ENCODE measurements at regions of chr19 and their contacts with region 1.

Region 1: GRCh38 chr19:51660975-51661600 is 14.5 kb upstream of the SIGLEC14 start:
- DNase-seq: peak; percentile 77 to 91 (median 80)
- ATAC-seq: peak; percentile 94
- H3K4me3 ChIP-seq: no peak overlapping the region
- H3K27ac ChIP-seq: no peak overlapping the region
- H3K4me1 ChIP-seq: peaks cover 0 to 2% of the 10 kb centered on the region in 2 experiments; a peak in 2 of 5 replicates
- H3K27me3 ChIP-seq: no peaks in the 10 kb centered on the region
- CTCF ChIP-seq: peak; percentile 74 to 89 (median 88)
- EP300 ChIP-seq: no peak
- POLR2A ChIP-seq: no peak
- RAD21 ChIP-seq: peak; percentile 75 to 89

Region 2: GRCh38 chr19:51158474-51159129 is 502.5 kb before region 1 on chr19:
- CTCF ChIA-PET with region 1: interaction called, 3 read pairs
- POLR2A ChIA-PET with region 1: no interaction called
- in situ Hi-C with region 1: loop called (anchors 25 kb)
- intact Hi-C with region 1: loop called (anchors 10 kb)
- DNase-seq: peak; percentile 73 to 85 (median 78)
- ATAC-seq: peak; percentile 96
- H3K4me3 ChIP-seq: no peak overlapping the region
- H3K27ac ChIP-seq: peak overlapping the region; percentile 34; the same call in 1 of the 3 replicates
- H3K4me1 ChIP-seq: peaks cover 0 to 9% of the 10 kb centered on the region in 2 experiments; a peak in 2 of 5 replicates
- H3K27me3 ChIP-seq: peaks cover 3 to 18% of the 10 kb centered on the region in 2 experiments; a peak in 3 of 5 replicates
- CTCF ChIP-seq: peak; percentile 84 to 91 (median 89)
- EP300 ChIP-seq: no peak
- POLR2A ChIP-seq: no peak
- RAD21 ChIP-seq: peak; percentile 82 to 86

Region 3: DNA sequence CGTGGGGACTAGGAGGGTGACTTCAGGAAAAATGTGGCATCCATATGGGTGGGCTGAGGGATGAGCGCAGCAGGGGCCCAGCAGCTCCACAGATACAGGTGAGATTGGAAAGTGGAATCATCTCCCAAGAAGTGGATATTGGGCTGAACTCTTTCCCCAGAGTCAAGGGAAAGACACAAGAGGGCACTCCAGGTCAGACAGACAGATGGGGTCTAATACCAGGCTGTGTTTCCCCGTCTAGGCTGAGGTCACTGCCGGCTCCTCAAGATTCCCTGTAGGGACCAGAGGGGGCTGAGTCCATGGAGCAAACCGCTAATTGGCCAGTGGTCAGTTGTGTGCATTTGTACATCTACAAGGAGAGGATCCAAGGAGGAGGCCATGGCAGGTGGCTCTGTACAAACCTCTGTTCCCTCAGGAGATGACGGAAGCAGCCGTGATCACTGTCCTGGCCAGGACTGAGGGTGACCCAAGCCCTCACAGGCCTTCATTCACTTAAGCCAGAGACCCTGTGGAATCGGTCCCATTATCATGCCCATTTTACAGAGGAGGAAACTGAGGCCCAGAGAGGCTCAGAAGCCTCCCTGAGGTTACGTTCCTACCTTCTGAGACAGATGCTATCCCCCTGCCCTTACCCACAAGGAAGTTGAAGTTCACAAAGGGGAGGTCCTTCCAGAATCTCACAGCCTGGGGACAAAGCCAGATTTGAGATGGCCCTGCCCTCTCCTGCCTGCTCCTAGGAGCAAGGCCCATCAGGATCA is 364.6 kb before region 1 on chr19:
- CTCF ChIA-PET with region 1: interaction called, 3 read pairs
- POLR2A ChIA-PET with region 1: no interaction called
- in situ Hi-C with region 1: no loop called
- intact Hi-C with region 1: loop called (anchors 2 kb)
- DNase-seq: peak; percentile 25 to 51 (median 34)
- ATAC-seq: peak; percentile 79
- H3K4me3 ChIP-seq: no peak overlapping the region
- H3K27ac ChIP-seq: no peak overlapping the region
- H3K4me1 ChIP-seq: peaks cover 0 to 7% of the 10 kb centered on the region in 2 experiments; a peak in 2 of 5 replicates
- H3K27me3 ChIP-seq: peaks cover 27 to 80% of the 10 kb centered on the region in 2 experiments; a peak in 4 of 5 replicates
- CTCF ChIP-seq: peak; percentile 44 to 69 (median 50); a peak in 5 of 6 replicates
- EP300 ChIP-seq: no peak
- POLR2A ChIP-seq: no peak
- RAD21 ChIP-seq: peak; percentile 47 to 79

Region 4: GRCh38 chr19:51422053-51422448 is 239.0 kb before region 1 on chr19:
- CTCF ChIA-PET with region 1: interaction called, 30 read pairs
- POLR2A ChIA-PET with region 1: interaction called, 5 read pairs
- in situ Hi-C with region 1: loop called (anchors 5 kb)
- intact Hi-C with region 1: loop called (anchors 1 kb)
- DNase-seq: peak; percentile 90 to 95 (median 94)
- ATAC-seq: peak; percentile 95
- H3K4me3 ChIP-seq: no peak overlapping the region
- H3K27ac ChIP-seq: no peak overlapping the region
- H3K4me1 ChIP-seq: peaks cover 3 to 23% of the 10 kb centered on the region in 2 experiments
- H3K27me3 ChIP-seq: no peaks in the 10 kb centered on the region
- CTCF ChIP-seq: peak; percentile 96
- EP300 ChIP-seq: peak; percentile 18; the same call in 1 of the 2 replicates
- POLR2A ChIP-seq: no peak
- RAD21 ChIP-seq: peak; percentile 98 to 100

Region 5: GRCh38 chr19:51473009-51473707 is 187.9 kb before region 1 on chr19:
- CTCF ChIA-PET with region 1: interaction called, 12 read pairs
- POLR2A ChIA-PET with region 1: interaction called, 3 read pairs
- in situ Hi-C with region 1: loop called (anchors 10 kb)
- intact Hi-C with region 1: loop called (anchors 2 kb)
- DNase-seq: peak; percentile 74 to 94 (median 80)
- ATAC-seq: peak; percentile 66
- H3K4me3 ChIP-seq: no peak overlapping the region
- H3K27ac ChIP-seq: no peak overlapping the region
- H3K4me1 ChIP-seq: peaks cover 19 to 33% of the 10 kb centered on the region in 2 experiments
- H3K27me3 ChIP-seq: no peaks in the 10 kb centered on the region
- CTCF ChIP-seq: peak; percentile 93 to 98 (median 93)
- EP300 ChIP-seq: 0 out of 2 replicates have a peak, but pooled peaks have one; percentile 34
- POLR2A ChIP-seq: no peak
- RAD21 ChIP-seq: peak; percentile 91 to 98

Region 6: DNA sequence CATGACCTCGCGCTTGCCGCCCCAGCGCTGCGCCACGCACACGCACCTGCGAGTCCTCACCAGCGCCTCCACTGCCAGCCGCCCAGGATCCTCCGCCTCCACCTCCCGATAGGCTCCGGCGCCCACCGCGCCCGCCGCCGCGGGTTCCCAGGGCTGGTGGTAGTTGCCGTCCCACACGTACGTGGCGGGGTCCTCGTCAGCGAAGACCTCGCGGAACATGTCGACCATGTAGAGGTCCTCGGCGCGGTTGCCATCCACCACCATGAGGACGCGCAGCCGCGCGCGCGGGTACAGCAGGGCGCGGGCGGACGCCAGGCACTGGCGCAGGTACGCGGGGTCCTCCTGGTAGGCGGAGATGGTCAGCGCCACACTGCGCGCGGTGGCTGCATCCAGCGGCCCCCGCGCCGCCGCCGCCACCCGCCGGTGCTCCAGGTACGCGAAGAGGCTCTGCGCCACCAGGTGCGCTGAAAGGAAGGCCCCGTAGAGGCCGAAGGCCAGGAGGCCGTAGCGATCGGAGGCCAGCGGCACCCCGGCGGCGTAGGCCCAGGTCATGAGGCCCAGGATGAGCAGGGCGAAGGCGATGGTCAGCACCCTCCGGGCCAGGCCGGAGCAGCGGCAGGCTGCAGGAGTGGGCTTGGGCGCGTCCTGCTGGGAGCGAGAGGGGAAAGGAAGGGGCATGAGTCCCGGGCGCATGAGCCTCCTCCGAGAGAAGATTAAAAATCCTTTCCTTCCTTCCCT is 58.3 kb after region 1 on chr19:
- CTCF ChIA-PET with region 1: no interaction called
- POLR2A ChIA-PET with region 1: no interaction called
- in situ Hi-C with region 1: no loop called
- intact Hi-C with region 1: no loop called
- DNase-seq: no peak
- ATAC-seq: no peak
- H3K4me3 ChIP-seq: no peak overlapping the region
- H3K27ac ChIP-seq: no peak overlapping the region
- H3K4me1 ChIP-seq: peaks cover 0 to 15% of the 10 kb centered on the region in 2 experiments; a peak in 2 of 5 replicates
- H3K27me3 ChIP-seq: peaks cover 0 to 7% of the 10 kb centered on the region in 2 experiments; a peak in 1 of 5 replicates
- CTCF ChIP-seq: no peak
- EP300 ChIP-seq: no peak
- POLR2A ChIP-seq: no peak
- RAD21 ChIP-seq: no peak

Region 7: DNA sequence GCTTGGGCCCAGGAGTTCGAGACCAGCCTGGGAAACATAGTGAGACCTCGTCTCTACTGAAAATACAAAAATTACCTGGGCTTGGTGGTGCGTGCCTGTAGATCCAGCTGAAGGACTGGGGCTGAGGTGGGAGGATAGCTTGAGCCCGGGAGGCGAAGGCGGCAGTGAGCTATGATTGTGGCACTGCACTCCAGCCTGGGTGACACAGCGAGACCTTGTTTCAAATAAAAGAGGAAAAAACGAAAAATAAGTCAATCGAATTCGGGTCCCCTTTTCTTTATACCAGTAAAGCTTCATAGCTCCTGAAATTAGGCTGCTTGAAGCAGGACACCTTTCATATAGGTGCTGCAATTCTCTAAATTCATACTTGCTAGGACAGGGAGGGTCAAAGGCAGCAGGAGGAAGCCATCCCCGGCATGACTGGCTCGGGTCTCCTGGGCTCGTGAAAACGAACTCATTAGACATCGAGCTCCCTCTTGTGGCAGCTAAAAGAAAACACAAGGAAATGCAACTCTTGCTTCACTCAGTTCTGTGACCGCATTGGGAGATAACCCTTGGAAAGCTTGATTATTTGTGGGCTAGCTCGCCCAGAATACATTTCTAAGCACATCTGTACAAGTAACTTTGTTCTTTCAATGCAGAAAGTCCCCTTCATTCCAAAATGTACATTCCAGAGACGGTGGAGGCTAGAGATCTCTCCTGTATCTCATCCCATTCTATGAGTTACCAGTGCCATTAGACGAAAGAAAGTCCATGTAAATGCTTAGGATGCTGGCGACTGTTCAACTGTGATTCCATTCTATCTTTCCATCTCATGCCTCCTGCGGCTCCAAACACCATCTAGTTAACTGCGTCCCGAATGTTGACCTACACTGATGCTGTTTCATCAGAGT is 116.7 kb after region 1 on chr19:
- CTCF ChIA-PET with region 1: no interaction called
- POLR2A ChIA-PET with region 1: no interaction called
- in situ Hi-C with region 1: no loop called
- intact Hi-C with region 1: loop called (anchors 2 kb)
- DNase-seq: peak; percentile 68 to 96 (median 71)
- ATAC-seq: peak; percentile 99
- H3K4me3 ChIP-seq: no peak overlapping the region
- H3K27ac ChIP-seq: peak overlapping the region; percentile 42
- H3K4me1 ChIP-seq: peaks cover 6 to 35% of the 10 kb centered on the region in 2 experiments; a peak in 3 of 5 replicates
- H3K27me3 ChIP-seq: no peaks in the 10 kb centered on the region
- CTCF ChIP-seq: peak; percentile 84 to 92 (median 88)
- EP300 ChIP-seq: peak; percentile 49; the same call in 1 of the 2 replicates
- POLR2A ChIP-seq: no peak
- RAD21 ChIP-seq: peak; percentile 86 to 90

Region 8: GRCh38 chr19:51807111-51807701 is 146.1 kb after region 1 on chr19:
- CTCF ChIA-PET with region 1: interaction called, 5 read pairs
- POLR2A ChIA-PET with region 1: no interaction called
- in situ Hi-C with region 1: no loop called
- intact Hi-C with region 1: loop called (anchors 1 kb)
- DNase-seq: peak; percentile 42 to 85 (median 52)
- ATAC-seq: peak; percentile 77
- H3K4me3 ChIP-seq: no peak overlapping the region
- H3K27ac ChIP-seq: peak overlapping the region; percentile 67
- H3K4me1 ChIP-seq: peaks cover 5 to 59% of the 10 kb centered on the region in 2 experiments; a peak in 4 of 5 replicates
- H3K27me3 ChIP-seq: no peaks in the 10 kb centered on the region
- CTCF ChIP-seq: peak in 2 of 3 experiments; percentile 18 to 41; a peak in 1 of 6 replicates
- EP300 ChIP-seq: peak; percentile 58
- POLR2A ChIP-seq: no peak
- RAD21 ChIP-seq: peak; percentile 24 to 31; a peak in 3 of 4 replicates